WTC11 (cell line): ENCODE measurements at regions of chr1 and their contacts with region 1.

Region 1: GRCh38 chr1:167913863-167914502 is at the start of gene ADCY10:
- DNase-seq: no peak
- ATAC-seq: peak; percentile 51
- H3K4me3 Mint-ChIP-seq: no peak within 1 kb of the TSS
- H3K27ac Mint-ChIP-seq: no peak within 1 kb of the TSS
- H3K4me1 Mint-ChIP-seq: peaks cover 32% of the 10 kb centered on the region
- H3K27me3 Mint-ChIP-seq: peaks cover 3% of the 10 kb centered on the region; the same call in 1 of the 2 replicates
- CTCF ChIP-seq: no peak
- total RNA-seq, gene ADCY10: 0.07 to 0.34 TPM in 2 of 3 replicates, not detected in the other

Region 2: GRCh38 chr1:167648978-167649744 is 264.8 kb before region 1 on chr1:
- CTCF ChIA-PET with region 1: no interaction called
- POLR2A ChIA-PET with region 1: no interaction called
- DNase-seq: no peak
- ATAC-seq: peak; percentile 75
- H3K4me3 Mint-ChIP-seq: no peak overlapping the region
- H3K27ac Mint-ChIP-seq: no peak overlapping the region
- H3K4me1 Mint-ChIP-seq: peaks cover 19% of the 10 kb centered on the region
- H3K27me3 Mint-ChIP-seq: no peaks in the 10 kb centered on the region; the same call in 1 of the 2 replicates
- CTCF ChIP-seq: no peak

Region 3: DNA sequence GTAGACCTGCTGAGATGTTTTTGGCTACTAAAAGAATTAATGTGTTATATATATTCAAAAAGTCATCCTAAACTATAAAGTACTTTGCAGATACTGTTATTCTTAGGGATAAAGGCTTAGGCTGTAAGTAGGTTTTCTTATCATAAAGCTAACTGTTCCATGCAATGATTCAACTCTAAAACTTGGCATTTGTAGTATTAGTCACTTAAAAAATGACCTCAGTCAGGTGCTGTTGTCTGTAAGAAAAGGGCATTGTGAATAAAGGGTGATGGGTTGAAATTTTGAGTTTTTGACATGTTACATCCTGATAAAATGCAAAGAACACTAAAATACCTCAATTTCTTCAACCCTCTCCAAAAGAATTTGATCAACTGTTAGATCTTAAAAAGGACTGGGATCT is 32.9 kb before region 1 on chr1:
- CTCF ChIA-PET with region 1: no interaction called
- POLR2A ChIA-PET with region 1: no interaction called
- DNase-seq: no peak
- ATAC-seq: no peak
- H3K4me3 Mint-ChIP-seq: no peak overlapping the region
- H3K27ac Mint-ChIP-seq: no peak overlapping the region
- H3K4me1 Mint-ChIP-seq: no peaks in the 10 kb centered on the region
- H3K27me3 Mint-ChIP-seq: no peaks in the 10 kb centered on the region
- CTCF ChIP-seq: no peak

Region 4: DNA sequence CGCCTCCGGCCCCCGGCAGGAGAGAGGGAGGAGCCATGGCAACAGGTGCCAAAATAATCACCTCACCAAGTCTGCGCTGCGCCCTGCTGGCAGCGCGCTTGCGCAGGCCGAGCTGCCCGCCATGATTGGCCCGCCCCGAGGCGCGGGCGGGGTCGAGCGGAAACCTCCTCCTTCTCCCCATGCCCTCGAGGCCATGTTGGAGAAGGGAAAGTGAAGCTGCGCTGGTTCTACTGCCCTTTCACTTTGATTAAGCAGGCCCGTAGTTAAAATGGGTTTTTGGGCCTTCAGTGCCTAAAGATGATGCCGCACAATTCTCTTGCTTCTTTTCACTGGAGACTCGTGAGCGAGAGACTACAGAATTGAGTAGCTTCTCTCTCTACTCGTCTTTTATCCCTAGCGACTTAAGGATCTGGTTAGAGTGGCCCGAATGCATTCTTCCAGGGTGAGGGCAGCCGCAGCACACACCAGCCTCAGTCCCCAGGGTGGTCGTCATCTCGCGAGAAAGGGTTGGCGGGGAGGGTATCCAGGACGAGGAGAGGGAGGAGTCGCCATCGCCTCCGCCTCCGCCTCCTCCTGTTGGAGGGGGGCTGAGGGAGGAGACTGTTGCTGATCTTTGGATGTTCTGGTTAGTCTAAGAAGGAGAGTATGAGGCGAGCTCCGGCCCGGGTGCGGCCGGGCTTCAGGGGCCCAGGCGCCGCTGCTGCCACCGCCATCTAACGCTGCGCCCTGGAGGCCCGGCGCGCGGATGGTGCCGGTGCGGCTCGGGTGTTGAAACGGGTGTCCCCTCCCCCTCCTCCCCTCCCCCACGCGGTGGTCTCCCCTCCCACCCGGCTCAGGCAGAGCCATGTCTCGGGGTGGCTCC is 22.3 kb after region 1 on chr1 and contains the start of gene DCAF6:
- CTCF ChIA-PET with region 1: no interaction called
- POLR2A ChIA-PET with region 1: interaction called, 14 read pairs
- DNase-seq: peak; percentile 96
- ATAC-seq: peak; percentile 87
- H3K4me3 Mint-ChIP-seq: peak within 1 kb of the TSS; percentile 92
- H3K27ac Mint-ChIP-seq: peak within 1 kb of the TSS; percentile 100
- H3K4me1 Mint-ChIP-seq: peaks cover 21% of the 10 kb centered on the region
- H3K27me3 Mint-ChIP-seq: no peaks in the 10 kb centered on the region
- CTCF ChIP-seq: no peak
- total RNA-seq, gene DCAF6: 13.5 to 17.4 TPM (median 16.1 TPM) in 3 replicates